ENCODE measurements at regions of chr12 and their contacts with region 1.

Region 1: GRCh38 chr12:22334410-22335290 is at the start of gene ST8SIA1:
- DNase-seq: no peak
- H3K4me3 ChIP-seq: peak within 1 kb of the TSS; percentile 66
- H3K27ac ChIP-seq: no peak within 1 kb of the TSS
- H3K27me3 ChIP-seq: peaks cover 36% of the 10 kb centered on the region
- CTCF ChIP-seq: no peak
- polyA plus RNA-seq, gene ST8SIA1: 0.04 and 0.26 TPM in 2 replicates

Region 2: DNA sequence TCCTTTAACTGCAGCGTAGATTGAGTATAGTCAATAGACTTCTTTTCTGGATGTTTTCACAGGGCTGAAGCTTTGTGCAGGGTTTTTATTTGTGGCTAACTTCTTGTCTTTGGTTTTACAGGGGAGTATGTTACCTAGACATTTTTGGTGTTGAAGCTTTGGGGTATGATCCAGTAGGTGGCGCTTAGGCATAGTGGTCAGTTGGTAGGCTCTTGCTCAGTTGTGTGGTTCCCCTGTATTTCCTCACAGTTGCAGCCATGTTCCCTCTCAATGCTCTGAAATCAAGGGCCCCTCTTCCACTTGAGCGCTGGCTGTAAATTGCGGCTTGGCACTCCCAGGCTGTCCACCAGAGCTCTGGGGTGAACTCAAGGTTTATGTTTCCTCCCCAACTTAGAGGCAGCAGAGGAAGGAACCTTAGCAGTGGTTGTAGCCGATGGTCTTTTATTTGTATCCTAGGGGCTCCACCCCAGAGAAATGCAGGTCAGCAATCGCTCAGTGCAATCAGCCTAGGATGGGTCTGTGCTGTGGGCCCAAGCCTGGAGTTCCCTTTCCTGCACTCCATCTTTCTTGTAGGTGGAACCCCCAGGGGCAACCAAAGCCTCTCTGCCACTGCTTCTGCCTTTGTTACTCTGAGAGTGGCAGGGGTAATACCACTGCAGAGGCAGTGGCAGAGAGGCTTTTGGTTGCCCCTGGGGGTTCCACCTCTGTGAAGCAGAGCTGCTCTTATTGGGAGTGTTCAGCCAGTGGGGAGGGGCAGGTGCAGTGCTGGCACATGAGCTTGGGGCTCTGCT is 233.5 kb before region 1 on chr12:
- CTCF ChIA-PET with region 1: interaction called, 45 read pairs
- POLR2A ChIA-PET with region 1: no interaction called
- DNase-seq: peak; percentile 15
- H3K4me3 ChIP-seq: no peak overlapping the region
- H3K27ac ChIP-seq: no peak overlapping the region
- H3K27me3 ChIP-seq: peaks cover 7% of the 10 kb centered on the region
- CTCF ChIP-seq: peak; percentile 63

Region 3: DNA sequence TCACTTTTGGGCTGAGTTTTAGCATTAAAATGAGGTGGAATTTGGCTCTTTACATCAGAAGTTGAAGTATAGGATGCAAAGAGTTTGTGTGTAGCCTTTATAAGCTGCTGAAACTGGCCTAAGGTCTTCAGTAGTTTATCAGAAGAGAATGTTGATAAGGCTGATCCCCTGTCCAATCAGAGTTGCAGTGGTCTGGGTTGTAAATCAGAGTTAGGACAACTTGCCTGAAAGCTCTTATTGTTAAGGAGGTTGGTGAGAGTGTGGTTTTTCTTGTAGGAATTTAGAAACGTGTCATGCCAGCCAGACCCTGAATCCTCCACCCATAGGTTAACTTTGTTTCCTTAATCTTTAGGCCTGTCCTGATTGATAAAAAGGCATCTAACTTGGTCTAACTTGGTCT is 143.7 kb before region 1 on chr12:
- CTCF ChIA-PET with region 1: interaction called, 11 read pairs
- POLR2A ChIA-PET with region 1: no interaction called
- DNase-seq: no peak
- H3K4me3 ChIP-seq: no peak overlapping the region
- H3K27ac ChIP-seq: no peak overlapping the region
- H3K27me3 ChIP-seq: no peaks in the 10 kb centered on the region
- CTCF ChIP-seq: no peak

Region 4: GRCh38 chr12:22255097-22255496 is 79.6 kb before region 1 on chr12:
- CTCF ChIA-PET with region 1: no interaction called
- POLR2A ChIA-PET with region 1: no interaction called
- DNase-seq: no peak
- H3K4me3 ChIP-seq: no peak overlapping the region
- H3K27ac ChIP-seq: no peak overlapping the region
- H3K27me3 ChIP-seq: peaks cover 14% of the 10 kb centered on the region
- CTCF ChIP-seq: no peak

Region 5: GRCh38 chr12:22286569-22286968 is 48.1 kb before region 1 on chr12:
- CTCF ChIA-PET with region 1: interaction called, 10 read pairs
- POLR2A ChIA-PET with region 1: interaction called, 3 read pairs
- DNase-seq: peak; percentile 78
- H3K4me3 ChIP-seq: no peak overlapping the region
- H3K27ac ChIP-seq: no peak overlapping the region
- H3K27me3 ChIP-seq: no peaks in the 10 kb centered on the region
- CTCF ChIP-seq: no peak